Upper lobe of right lung (tissue), 1 donor: ENCODE measurements at regions of chr4 and their contacts with region 1.

Region 1: GRCh38 chr4:62571494-62571893 is 1371.4 kb downstream of the ADGRL3 start:
- DNase-seq: no peak
- ATAC-seq: no peak
- H3K4me3 ChIP-seq: no peak overlapping the region
- H3K27ac ChIP-seq: no peak overlapping the region
- H3K4me1 ChIP-seq: no peaks in the 10 kb centered on the region
- H3K27me3 ChIP-seq: no peaks in the 10 kb centered on the region
- CTCF ChIP-seq: no peak

Region 2: DNA sequence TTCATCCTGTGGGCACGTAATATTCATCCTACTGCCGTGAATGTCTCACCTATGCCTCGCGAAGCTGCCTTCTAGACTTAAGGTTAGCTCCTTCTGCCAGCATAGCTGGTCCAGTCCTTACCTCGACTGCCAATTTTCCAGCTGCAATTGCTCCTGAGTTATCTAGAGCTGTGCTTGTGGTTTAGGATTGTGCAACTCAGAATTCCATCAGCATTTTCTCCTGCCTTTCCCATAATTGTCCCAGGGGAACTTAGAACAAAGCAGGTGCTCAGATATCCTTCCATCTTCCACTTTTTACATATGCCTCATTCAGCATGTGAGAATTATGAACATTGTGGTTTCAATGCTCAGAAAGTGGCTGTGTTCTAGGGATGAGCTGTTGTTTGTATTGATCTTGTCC is 1502.7 kb before region 1 on chr4:
- intact Hi-C with region 1: loop called (anchors 10 kb)
- DNase-seq: no peak
- ATAC-seq: no peak
- H3K4me3 ChIP-seq: no peak overlapping the region
- H3K27ac ChIP-seq: no peak overlapping the region
- H3K4me1 ChIP-seq: no peaks in the 10 kb centered on the region
- H3K27me3 ChIP-seq: no peaks in the 10 kb centered on the region
- CTCF ChIP-seq: no peak